Panc1 (cell line): ENCODE measurements at regions of chrX and their contacts with region 1.

Region 1: DNA sequence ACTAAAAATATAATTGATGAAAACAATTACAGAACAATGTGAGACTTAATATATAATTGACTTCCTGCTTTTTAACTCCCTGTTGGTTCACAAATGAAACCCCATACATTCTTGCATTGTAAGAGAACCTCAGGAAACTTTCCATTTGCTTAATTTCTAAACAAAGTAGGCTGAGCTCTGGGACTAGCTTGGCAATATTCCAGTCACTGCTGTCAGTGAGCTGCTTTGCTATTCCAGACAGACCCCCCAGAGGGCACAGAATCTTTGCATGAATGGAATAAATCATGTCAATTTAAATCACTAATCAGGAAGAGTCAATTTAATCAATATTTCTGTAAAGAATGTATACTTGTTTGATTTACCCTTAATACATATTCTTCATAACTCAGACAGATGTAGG is 110.6 kb downstream of the NEXMIF start:
- DNase-seq: no peak
- ATAC-seq: no peak
- H3K4me3 ChIP-seq: no peak overlapping the region
- H3K27ac ChIP-seq: no peak overlapping the region
- H3K4me1 ChIP-seq: no peaks in the 10 kb centered on the region
- H3K27me3 ChIP-seq: no peaks in the 10 kb centered on the region
- CTCF ChIP-seq: no peak

Region 2: GRCh38 chrX:74684466-74684865 is 130.2 kb before region 1 on chrX:
- CTCF ChIA-PET with region 1: no interaction called
- POLR2A ChIA-PET with region 1: no interaction called
- in situ Hi-C with region 1: no loop called
- intact Hi-C with region 1: no loop called
- DNase-seq: no peak
- ATAC-seq: no peak
- H3K4me3 ChIP-seq: no peak overlapping the region
- H3K27ac ChIP-seq: no peak overlapping the region
- H3K4me1 ChIP-seq: no peaks in the 10 kb centered on the region
- H3K27me3 ChIP-seq: no peaks in the 10 kb centered on the region
- CTCF ChIP-seq: no peak

Region 3: DNA sequence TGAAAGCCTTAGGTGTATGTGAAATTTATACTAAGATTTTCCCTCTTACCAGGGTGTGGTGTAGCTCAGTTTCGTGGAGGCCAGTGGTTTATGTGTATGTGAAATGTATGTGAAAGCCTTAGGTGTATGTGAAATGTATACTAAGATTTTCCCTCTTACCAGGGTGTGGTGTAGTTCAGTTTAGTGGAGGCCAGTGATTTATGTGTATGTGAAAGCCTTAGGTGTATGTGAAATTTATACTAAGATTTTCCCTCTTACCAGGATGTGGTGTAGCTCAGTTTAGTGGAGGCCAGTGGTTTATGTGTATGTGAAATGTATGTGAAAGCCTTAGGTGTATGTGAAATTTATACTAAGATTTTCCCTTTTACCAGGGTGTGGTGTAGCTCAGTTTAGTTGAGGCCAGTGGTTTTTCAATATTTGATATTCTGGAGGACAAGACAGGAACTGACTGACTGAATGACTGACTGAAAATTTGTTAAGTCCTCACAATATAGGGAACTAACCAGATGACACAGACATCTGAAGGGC is 33.1 kb before region 1 on chrX:
- CTCF ChIA-PET with region 1: no interaction called
- POLR2A ChIA-PET with region 1: interaction called, 15 read pairs
- in situ Hi-C with region 1: no loop called
- intact Hi-C with region 1: no loop called
- DNase-seq: no peak
- ATAC-seq: no peak
- H3K4me3 ChIP-seq: no peak overlapping the region
- H3K27ac ChIP-seq: no peak overlapping the region
- H3K4me1 ChIP-seq: no peaks in the 10 kb centered on the region
- H3K27me3 ChIP-seq: no peaks in the 10 kb centered on the region
- CTCF ChIP-seq: no peak